Naive thymus-derived CD8-positive, alpha-beta T cell (primary cell): ENCODE measurements at regions of chr1 and their contacts with region 1.

Region 1: DNA sequence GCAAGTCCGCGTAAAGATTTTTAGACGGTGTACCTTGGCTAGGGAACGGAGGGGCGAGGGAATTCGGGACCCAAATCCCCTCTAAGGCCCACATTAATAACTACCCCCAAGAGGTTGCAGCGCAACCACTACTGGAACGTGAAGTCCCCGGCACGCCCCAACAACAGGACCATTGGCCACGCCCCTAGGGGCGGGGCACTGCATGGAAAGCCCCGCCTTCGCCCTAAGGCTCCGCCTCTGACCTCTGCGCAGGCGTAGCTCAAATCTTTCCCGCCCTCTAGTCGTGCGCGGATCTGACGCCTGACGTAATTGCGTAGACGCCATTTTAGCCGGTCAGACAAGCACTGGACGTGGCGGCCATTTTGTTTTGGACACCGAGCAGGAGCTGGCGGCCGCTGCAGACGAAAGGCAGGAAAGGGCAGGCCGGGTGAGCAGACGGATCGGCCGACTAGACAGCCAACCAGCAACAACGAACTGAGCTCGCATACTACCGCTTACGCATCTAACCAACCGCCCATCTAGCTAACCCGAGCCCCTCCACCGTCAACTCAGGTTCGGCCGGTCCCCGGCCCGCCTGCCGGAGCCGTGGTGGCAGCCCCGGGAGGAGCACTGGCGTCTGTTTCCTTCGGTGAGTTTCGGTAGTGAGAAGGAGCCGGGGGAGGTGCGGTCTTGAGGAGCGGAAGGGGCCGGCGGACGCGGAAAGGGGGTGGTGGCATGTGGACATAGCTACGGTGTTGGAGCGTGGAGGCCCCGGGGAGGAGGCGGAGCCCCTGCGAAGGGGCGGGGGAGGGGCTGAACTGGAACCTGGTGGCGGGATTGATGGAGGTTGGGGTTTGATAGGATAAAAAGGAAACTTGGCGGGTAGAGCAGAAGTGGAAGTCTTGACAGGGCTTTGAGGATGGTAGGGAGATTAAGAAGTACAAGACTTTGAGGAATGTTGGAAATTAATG is at the start of gene CHTOP:
- DNase-seq: peak; percentile 87 to 99 (median 96)
- ATAC-seq: peak; percentile 87 to 89
- H3K4me3 Mint-ChIP-seq: peak within 1 kb of the TSS; percentile 94 to 100 (median 100)
- H3K27ac Mint-ChIP-seq: peak within 1 kb of the TSS; percentile 98 to 100 (median 100)
- H3K4me1 Mint-ChIP-seq: peaks cover 12 to 47% (median 39%) of the 10 kb centered on the region in 4 donors
- H3K27me3 Mint-ChIP-seq: no peaks in the 10 kb centered on the region
- polyA plus RNA-seq, gene CHTOP: 45.2 to 74.7 (median 48.8) TPM

Region 2: GRCh38 chr1:153545067-153546055 is 88.6 kb before region 1 on chr1 and contains the start of gene S100A4:
- POLR2A ChIA-PET with region 1: interaction called, 29 read pairs
- DNase-seq: peak; percentile 57 to 93 (median 78)
- ATAC-seq: peak; percentile 77 to 82
- H3K4me3 Mint-ChIP-seq: peak within 1 kb of the TSS; percentile 88 to 97 (median 92)
- H3K27ac Mint-ChIP-seq: peak within 1 kb of the TSS; percentile 96 to 99 (median 97)
- H3K4me1 Mint-ChIP-seq: peaks cover 54 to 82% (median 75%) of the 10 kb centered on the region in 4 donors
- H3K27me3 Mint-ChIP-seq: no peaks in the 10 kb centered on the region
- polyA plus RNA-seq, gene S100A4: 421 to 1,131 (median 581) TPM

Region 3: DNA sequence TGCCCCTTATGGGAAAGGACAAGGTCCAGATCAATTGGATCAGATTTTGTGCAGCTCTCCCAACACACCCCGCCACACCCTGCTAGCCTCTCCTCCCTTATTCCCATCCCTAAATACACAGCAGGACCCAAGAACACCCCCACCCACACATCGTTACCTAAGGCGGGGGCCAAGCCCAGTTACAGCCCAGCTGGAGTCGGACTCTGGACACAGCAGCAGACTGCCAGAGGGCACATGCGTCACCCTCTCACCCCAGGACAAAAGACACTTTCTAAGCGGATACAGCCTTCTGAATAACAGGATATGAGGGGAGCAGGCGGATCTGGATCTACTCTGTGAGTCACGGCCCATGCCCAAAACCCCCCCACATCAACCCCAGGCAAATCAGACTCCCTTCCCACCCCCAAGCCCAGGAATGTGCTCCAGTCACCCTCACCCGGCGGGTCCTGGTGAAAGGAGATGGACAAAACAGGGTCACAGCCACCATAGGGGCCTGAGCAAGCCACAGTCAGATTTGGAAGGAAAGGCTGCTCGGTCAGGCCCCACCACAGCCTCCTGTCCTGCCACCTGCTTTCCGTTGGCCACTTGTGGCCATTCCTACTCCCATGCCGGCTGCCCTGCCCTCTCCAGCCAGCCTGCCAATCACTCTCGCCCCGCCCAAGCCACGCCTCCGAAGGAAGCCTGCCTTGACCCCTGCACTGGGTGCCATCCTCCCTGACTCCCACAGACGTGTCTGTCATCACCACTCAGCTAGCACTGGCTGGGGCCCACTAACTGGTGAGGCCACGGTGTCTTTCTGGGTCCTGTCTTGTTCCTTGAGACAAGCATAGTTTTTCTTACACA is 25.0 kb before region 1 on chr1:
- POLR2A ChIA-PET with region 1: no interaction called
- DNase-seq: no peak
- ATAC-seq: no peak
- H3K4me3 Mint-ChIP-seq: no peak overlapping the region
- H3K27ac Mint-ChIP-seq: peak overlapping the region in 1 of 10 donors; percentile 28
- H3K4me1 Mint-ChIP-seq: no peaks in the 10 kb centered on the region
- H3K27me3 Mint-ChIP-seq: no peaks in the 10 kb centered on the region

Region 4: DNA sequence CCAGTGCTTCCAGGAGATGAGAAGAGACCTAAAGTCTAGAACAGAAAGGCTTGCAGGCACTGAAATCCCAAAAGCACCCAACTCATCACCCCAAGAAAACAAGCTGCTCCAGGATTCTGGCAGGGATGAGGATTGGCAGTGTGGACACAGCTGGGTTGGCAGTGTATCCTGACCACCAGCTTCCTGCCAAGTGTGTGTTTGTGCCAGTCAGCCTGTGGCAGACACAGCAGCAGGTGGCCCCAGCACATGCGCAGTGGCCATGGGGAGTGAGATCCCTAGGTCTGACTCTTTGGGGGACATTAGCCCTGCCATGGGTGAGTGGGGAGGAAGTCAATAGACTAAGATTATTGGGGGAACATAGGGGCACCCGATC is 15.9 kb after region 1 on chr1:
- POLR2A ChIA-PET with region 1: interaction called, 85 read pairs
- DNase-seq: no peak
- ATAC-seq: peak; percentile 42 to 45
- H3K4me3 Mint-ChIP-seq: peak overlapping the region; percentile 61 to 91 (median 83)
- H3K27ac Mint-ChIP-seq: peak overlapping the region; percentile 71 to 97 (median 94)
- H3K4me1 Mint-ChIP-seq: peaks cover 32 to 58% (median 55%) of the 10 kb centered on the region in 4 donors
- H3K27me3 Mint-ChIP-seq: no peaks in the 10 kb centered on the region

Region 5: DNA sequence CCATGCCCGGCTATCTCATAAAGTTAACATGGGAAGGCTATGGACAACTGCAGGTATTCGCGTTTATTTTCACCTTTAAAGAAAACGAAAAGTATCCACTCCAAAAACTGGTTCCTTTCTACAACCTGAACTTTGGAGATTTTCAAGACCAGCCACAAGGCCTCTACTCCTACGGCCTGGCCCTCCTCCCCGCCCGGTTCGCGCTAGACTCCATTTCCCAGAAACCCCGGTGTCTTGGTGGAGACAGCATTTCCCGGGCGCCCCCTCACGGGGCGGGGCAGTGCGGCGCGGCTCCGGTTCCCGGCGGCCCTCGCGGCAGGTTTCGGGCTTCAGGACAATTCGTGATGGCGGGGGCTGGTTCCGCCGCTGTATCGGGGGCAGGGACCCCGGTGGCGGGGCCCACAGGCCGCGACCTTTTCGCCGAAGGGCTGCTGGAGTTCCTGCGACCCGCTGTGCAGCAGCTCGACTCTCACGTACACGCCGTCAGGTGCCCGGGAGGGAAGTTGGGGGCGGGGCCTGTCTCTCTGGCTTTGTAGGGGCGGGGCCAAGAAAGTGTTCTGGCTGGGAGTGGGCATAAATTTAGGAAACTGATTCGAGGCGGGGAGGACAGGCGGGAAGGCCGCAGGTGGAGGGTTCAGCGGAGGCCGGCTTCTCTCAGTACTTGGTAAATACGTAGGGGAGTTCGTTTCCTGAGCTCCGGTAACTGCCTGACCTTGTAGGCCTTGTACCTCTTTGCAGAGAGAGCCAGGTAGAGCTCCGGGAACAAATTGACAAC is 24.6 kb after region 1 on chr1 and contains the start of gene SNAPIN:
- POLR2A ChIA-PET with region 1: interaction called, 34 read pairs
- DNase-seq: peak; percentile 81 to 94 (median 86)
- ATAC-seq: peak; percentile 97 to 98
- H3K4me3 Mint-ChIP-seq: peak within 1 kb of the TSS; percentile 88 to 98 (median 96)
- H3K27ac Mint-ChIP-seq: peak within 1 kb of the TSS; percentile 88 to 97 (median 95)
- H3K4me1 Mint-ChIP-seq: peaks cover 0 to 21% (median 12%) of the 10 kb centered on the region in 4 donors
- H3K27me3 Mint-ChIP-seq: no peaks in the 10 kb centered on the region
- polyA plus RNA-seq, gene SNAPIN: 66.6 to 77.4 (median 72.3) TPM

Region 6: DNA sequence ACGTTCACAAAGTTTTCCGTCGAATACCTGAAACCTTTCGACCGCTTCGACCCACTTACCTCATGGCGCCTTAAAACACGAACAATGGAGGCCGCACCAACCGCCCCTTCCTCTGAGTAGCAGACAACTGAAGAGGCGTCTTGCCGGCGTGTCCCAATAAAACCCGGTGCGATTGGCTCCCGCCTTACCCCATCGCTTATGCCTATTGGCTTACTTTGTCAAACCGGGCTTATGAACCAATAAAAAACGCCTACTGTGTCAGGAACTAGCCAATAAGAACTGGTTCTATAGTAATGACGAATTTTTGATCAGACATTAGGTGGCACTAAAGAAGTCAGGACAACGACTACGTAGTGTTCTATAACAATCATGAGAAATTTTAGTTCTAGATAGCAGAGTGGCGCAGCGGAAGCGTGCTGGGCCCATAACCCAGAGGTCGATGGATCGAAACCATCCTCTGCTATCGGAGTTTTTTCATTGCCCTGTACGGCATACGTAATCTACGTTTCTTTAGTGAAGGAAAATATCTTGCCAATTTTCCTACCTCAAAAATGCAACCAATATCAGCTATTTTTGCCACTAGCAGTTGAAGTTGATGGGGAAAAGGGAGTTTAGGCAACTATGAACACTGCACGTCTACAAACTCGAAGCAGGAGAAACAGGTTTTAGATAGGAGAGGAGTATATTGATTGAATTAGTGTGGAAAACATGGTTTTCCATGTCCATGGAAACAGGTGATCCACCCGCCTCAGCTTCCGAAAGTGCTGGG is 37.1 kb after region 1 on chr1 and contains the start of gene ILF2:
- POLR2A ChIA-PET with region 1: interaction called, 16 read pairs
- DNase-seq: peak; percentile 88 to 100 (median 97)
- ATAC-seq: peak; percentile 90 to 91
- H3K4me3 Mint-ChIP-seq: no peak within 1 kb of the TSS
- H3K27ac Mint-ChIP-seq: peak within 1 kb of the TSS in 2 of 10 donors; percentile 78 to 81
- H3K4me1 Mint-ChIP-seq: peaks cover 6 to 32% (median 22%) of the 10 kb centered on the region in 4 donors
- H3K27me3 Mint-ChIP-seq: peaks cover 0 to under 1% (median 0%) of the 10 kb centered on the region in 5 donors
- polyA plus RNA-seq, gene ILF2: 115 to 140 (median 121) TPM

Region 7: DNA sequence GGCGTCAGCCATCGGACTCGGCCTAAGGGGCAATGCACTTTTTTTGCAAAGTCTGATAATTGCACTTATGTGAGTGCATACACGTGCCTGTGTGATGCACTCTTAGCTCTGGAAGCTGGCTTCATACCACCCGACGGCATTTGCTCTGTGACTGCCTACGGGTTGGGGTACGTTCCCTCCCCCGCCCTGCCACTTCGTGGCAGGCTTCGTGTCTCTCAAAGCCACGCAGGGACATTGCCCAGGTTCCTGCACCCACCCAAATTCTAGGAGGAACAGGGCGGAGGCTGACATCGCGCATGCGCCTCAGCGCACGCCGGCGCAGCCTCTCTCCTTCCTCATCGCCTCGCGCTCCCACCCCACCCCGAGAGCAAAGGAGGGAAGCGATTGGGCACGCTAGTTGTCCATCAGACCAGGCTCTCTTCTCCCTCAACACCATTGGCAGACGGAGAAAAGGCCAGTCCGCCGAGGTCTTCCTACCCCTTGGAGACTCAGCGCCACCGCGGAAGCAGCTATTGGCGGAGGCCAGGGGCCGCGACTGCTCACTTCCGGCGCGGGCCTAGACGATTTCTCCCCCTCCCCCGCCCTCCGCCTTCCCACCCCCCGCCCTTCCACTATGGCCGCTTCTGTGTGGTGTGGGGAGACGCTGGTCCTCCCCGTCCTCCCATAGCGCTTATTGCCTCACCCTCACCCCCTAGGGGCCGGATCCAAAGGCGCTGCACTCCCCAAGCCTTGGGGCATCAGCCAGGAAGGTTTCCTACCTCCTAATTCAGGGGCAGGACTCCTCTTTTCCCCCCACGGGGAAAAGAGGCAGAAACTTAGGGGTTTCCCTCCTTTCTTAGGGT is 93.7 kb after region 1 on chr1 and contains the start of gene INTS3:
- POLR2A ChIA-PET with region 1: interaction called, 18 read pairs
- DNase-seq: peak; percentile 93 to 100 (median 99)
- ATAC-seq: peak; percentile 98 to 99
- H3K4me3 Mint-ChIP-seq: peak within 1 kb of the TSS; percentile 89 to 97 (median 94)
- H3K27ac Mint-ChIP-seq: peak within 1 kb of the TSS; percentile 93 to 99 (median 98)
- H3K4me1 Mint-ChIP-seq: peaks cover 14 to 41% (median 29%) of the 10 kb centered on the region in 4 donors
- H3K27me3 Mint-ChIP-seq: no peaks in the 10 kb centered on the region
- polyA plus RNA-seq, gene INTS3: 10.0 to 13.8 (median 10.8) TPM

Region 8: DNA sequence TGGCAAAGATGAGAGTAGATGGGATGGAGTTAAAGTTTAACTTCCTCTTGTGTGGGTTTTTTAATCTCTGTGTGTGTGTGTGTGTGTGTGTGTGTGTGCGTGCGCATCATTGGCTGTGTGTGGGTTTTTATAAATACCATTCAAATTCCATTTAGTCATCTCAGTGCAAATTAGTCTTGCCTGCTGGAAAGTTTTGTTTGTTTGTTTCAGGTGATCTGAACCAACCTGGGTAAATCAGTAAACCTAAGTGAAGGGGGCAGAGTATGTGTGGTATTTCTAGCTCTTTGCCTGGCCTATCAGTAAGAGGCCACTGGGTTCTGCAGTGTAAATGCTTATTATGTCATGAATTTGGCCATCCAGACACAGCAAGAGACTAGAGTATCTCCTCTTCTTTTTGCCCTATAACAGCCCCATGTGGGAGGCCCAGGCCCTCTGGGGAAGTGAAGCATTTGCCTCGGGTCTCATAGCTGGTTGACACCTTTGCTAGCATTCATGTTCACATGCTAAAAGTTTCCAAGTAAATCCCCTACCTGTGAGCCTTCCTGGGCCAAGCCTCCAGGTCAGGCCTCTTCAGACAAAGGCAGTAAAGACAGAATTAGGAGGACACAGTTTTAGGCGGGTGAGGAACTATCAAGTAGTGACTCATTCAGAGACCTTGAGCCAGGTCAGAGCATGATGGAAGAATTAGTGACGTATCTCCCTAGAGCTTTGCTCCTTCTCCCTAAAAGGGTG is 108.6 kb after region 1 on chr1:
- POLR2A ChIA-PET with region 1: no interaction called
- DNase-seq: no peak
- ATAC-seq: no peak
- H3K4me3 Mint-ChIP-seq: no peak overlapping the region
- H3K27ac Mint-ChIP-seq: peak overlapping the region in 2 of 10 donors; percentile 16 to 56
- H3K4me1 Mint-ChIP-seq: peaks cover 9 to 31% (median 17%) of the 10 kb centered on the region in 4 donors
- H3K27me3 Mint-ChIP-seq: no peaks in the 10 kb centered on the region